Calu3 (cell line): ENCODE measurements at regions of chr18 and their contacts with region 1.

Region 1: DNA sequence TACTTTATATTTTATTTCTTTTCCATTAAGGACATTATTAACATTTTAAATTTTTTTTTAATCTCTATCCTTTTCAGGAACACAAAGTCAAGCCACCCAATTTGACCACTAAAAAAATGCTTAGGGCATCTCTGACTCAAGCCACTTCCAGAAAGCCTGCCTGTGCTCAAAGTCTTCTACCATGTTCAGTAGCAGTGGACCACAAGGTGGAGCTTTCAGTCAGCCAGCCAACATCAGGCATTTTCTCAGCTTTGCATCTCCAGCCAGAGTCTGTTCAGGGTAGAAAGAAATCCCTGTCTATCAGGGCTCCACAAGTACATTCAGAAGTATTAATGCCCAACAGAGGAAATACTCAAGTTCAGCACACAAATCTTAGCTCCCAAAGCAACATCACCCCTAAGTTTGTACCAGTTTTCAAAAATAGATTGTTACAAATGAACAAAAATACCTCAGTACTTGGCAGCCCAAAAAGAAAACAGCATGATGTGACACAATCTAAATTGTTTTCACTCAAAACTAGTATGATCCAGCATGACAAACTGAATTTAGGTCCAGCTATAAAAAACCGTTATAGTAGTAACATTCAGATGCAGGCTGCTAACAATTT is 37.6 kb downstream of the C18orf63 start:
- DNase-seq: peak; percentile 63
- H3K4me3 Mint-ChIP-seq: no peak overlapping the region
- H3K27ac Mint-ChIP-seq: no peak overlapping the region
- H3K4me1 Mint-ChIP-seq: peaks cover 9% of the 10 kb centered on the region
- H3K27me3 Mint-ChIP-seq: peaks cover 11% of the 10 kb centered on the region
- CTCF ChIP-seq: peak; percentile 69

Region 2: DNA sequence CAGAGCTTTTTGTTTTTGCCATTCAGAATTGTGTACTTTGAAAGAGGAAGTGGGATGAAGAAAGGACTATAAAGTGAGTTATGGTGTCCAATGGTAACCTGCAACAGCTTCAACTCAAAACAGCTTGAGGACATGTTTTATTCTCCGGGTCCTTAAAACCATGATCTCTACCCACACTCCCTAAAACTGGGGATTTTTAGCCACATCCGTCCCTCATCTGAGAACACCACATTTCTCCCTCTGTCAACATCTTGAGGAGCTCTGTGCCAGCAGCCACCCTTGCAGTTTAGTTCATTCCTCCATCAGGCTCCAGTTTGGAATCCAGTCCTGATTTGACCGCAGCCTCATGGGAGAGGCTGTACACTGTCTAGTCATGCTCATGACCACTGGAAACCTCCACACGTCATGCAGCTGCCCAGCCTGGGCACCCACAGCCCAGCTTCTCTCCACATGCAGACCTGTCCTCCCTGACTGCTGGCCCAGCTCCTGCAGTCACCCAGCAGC is 25.0 kb after region 1 on chr18:
- CTCF ChIA-PET with region 1: no interaction called
- intact Hi-C with region 1: no loop called
- DNase-seq: no peak
- H3K4me3 Mint-ChIP-seq: no peak overlapping the region
- H3K27ac Mint-ChIP-seq: no peak overlapping the region
- H3K4me1 Mint-ChIP-seq: peaks cover 7% of the 10 kb centered on the region
- H3K27me3 Mint-ChIP-seq: peaks cover 24% of the 10 kb centered on the region
- CTCF ChIP-seq: no peak

Region 3: DNA sequence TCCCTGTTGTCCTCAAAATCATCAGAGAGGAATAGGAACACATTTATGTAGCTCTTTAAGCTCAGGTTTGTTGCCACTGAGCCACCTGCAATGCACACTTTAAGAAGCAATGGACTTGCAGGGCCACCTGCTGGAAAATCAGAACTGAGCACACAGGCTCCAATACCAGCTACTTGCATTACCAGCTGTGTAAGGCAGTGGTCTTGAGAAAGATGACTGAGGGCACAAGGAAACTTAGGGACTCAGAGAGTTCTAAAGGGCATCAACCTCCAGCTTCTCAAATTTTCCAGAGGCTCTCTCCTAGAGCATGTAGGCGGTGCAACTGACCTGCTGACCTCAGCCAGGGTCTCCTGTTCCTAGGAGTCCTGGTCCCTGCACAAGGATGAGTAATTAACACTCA is 140.4 kb after region 1 on chr18:
- CTCF ChIA-PET with region 1: interaction called, 59 read pairs
- intact Hi-C with region 1: loop called (anchors 1 kb)
- DNase-seq: peak; percentile 61
- H3K4me3 Mint-ChIP-seq: no peak overlapping the region
- H3K27ac Mint-ChIP-seq: no peak overlapping the region
- H3K4me1 Mint-ChIP-seq: peaks cover 17% of the 10 kb centered on the region
- H3K27me3 Mint-ChIP-seq: peaks cover 11% of the 10 kb centered on the region
- CTCF ChIP-seq: peak; percentile 63